Sciatic nerve (tissue), 2 donors: ENCODE measurements at regions of chr20 and their contacts with region 1.

Region 1: GRCh38 chr20:19995220-19995863 is 21.8 kb upstream of the NAA20 start:
- DNase-seq: no peak
- ATAC-seq: peak; percentile 62

Region 2: GRCh38 chr20:19784511-19785172 is 210.7 kb before region 1 on chr20:
- intact Hi-C with region 1: loop called (anchors 10 kb)
- DNase-seq: no peak
- ATAC-seq: peak; percentile 91